ENCODE measurements at regions of chr21 and their contacts with region 1.

Region 1: DNA sequence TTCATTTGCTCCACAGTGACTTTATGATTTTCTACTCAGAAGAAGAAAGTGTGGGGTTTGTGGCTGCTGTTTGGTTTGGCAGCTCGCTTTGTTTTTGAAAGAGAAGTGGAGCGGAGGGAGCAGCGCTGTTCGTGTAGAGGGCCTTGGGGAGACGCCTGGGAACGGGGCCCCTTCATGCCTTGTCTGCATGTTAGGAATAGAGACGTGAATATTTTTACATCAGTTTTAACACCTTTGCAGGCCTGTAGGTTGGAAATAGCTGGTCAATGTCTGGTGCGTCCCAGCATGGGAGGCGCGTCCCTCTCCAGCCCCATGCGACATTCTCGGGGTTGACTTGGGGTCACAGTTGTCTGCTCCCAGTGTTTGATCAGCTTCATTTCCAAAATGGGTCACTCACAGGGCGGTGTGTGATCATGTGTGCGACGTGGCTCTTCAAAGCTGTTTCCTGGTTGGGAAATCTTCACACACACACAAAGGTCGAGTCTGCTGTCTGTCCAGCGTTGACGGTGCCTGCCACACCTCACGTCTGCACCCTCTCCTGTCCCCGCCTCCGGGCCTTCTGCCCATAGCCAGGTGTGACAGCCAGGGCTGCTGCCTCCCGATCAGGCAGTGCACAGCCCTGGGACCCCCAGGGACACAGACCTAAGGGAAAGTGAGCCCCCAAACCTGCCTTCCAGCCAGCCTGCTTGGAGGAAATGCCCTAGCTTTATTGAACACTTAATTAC is 149.2 kb downstream of the PSMG1 start:
- DNase-seq: peak; percentile 98
- ATAC-seq: peak; percentile 99
- H3K4me3 ChIP-seq: no peak overlapping the region; a peak in 1 of 6 replicates
- H3K27ac ChIP-seq: peak overlapping the region; percentile 72
- H3K4me1 ChIP-seq: peaks cover 88% of the 10 kb centered on the region
- H3K27me3 ChIP-seq: no peaks in the 10 kb centered on the region
- CTCF ChIP-seq: peak; percentile 71
- EP300 ChIP-seq: peak; percentile 67 to 98; a peak in 3 of 4 replicates
- POLR2A ChIP-seq: peak; percentile 34 to 47; a peak in 2 of 4 replicates
- RAD21 ChIP-seq: peak; percentile 33; the same call in 1 of the 2 replicates

Region 2: GRCh38 chr21:38588096-38588495 is 445.9 kb before region 1 on chr21:
- CTCF ChIA-PET with region 1: no interaction called
- POLR2A ChIA-PET with region 1: no interaction called
- in situ Hi-C with region 1: no loop called
- intact Hi-C with region 1: loop called (anchors 5 kb)
- DNase-seq: no peak
- ATAC-seq: no peak
- H3K4me3 ChIP-seq: no peak overlapping the region
- H3K27ac ChIP-seq: no peak overlapping the region
- H3K4me1 ChIP-seq: peaks cover 11% of the 10 kb centered on the region
- H3K27me3 ChIP-seq: peaks cover 2 to 3% of the 10 kb centered on the region in 2 experiments; a peak in 4 of 5 replicates
- CTCF ChIP-seq: no peak
- EP300 ChIP-seq: no peak
- POLR2A ChIP-seq: no peak
- RAD21 ChIP-seq: no peak

Region 3: GRCh38 chr21:38831526-38832467 is 202.2 kb before region 1 on chr21:
- CTCF ChIA-PET with region 1: no interaction called
- POLR2A ChIA-PET with region 1: interaction called, 3 read pairs
- in situ Hi-C with region 1: no loop called
- intact Hi-C with region 1: loop called (anchors 5 kb)
- DNase-seq: peak; percentile 91
- ATAC-seq: peak; percentile 86
- H3K4me3 ChIP-seq: no peak overlapping the region; a peak in 1 of 6 replicates
- H3K27ac ChIP-seq: peak overlapping the region; percentile 31
- H3K4me1 ChIP-seq: peaks cover 51% of the 10 kb centered on the region
- H3K27me3 ChIP-seq: no peaks in the 10 kb centered on the region
- CTCF ChIP-seq: no peak
- EP300 ChIP-seq: peak; percentile 49 to 69; a peak in 2 of 4 replicates
- POLR2A ChIP-seq: no peak
- RAD21 ChIP-seq: no peak

Region 4: GRCh38 chr21:38914283-38915012 is 119.6 kb before region 1 on chr21:
- CTCF ChIA-PET with region 1: no interaction called
- POLR2A ChIA-PET with region 1: no interaction called
- in situ Hi-C with region 1: no loop called
- intact Hi-C with region 1: loop called (anchors 5 kb)
- DNase-seq: no peak
- ATAC-seq: peak; percentile 8; the same call in 2 of the 3 replicates
- H3K4me3 ChIP-seq: peak overlapping the region in 1 of 3 experiments; percentile 11; a peak in 1 of 6 replicates
- H3K27ac ChIP-seq: peak overlapping the region; percentile 48
- H3K4me1 ChIP-seq: peaks cover 85% of the 10 kb centered on the region
- H3K27me3 ChIP-seq: no peaks in the 10 kb centered on the region; a peak in 1 of 5 replicates
- CTCF ChIP-seq: no peak
- EP300 ChIP-seq: peak in 1 of 2 experiments; percentile 34; a peak in 1 of 4 replicates
- POLR2A ChIP-seq: no peak
- RAD21 ChIP-seq: no peak

Region 5: GRCh38 chr21:39014747-39015146 is 19.3 kb before region 1 on chr21:
- CTCF ChIA-PET with region 1: no interaction called
- POLR2A ChIA-PET with region 1: no interaction called
- in situ Hi-C with region 1: no loop called
- intact Hi-C with region 1: no loop called
- DNase-seq: no peak
- ATAC-seq: no peak
- H3K4me3 ChIP-seq: no peak overlapping the region
- H3K27ac ChIP-seq: no peak overlapping the region
- H3K4me1 ChIP-seq: peaks cover 36% of the 10 kb centered on the region
- H3K27me3 ChIP-seq: no peaks in the 10 kb centered on the region
- CTCF ChIP-seq: no peak
- EP300 ChIP-seq: no peak
- POLR2A ChIP-seq: no peak
- RAD21 ChIP-seq: no peak

Region 6: DNA sequence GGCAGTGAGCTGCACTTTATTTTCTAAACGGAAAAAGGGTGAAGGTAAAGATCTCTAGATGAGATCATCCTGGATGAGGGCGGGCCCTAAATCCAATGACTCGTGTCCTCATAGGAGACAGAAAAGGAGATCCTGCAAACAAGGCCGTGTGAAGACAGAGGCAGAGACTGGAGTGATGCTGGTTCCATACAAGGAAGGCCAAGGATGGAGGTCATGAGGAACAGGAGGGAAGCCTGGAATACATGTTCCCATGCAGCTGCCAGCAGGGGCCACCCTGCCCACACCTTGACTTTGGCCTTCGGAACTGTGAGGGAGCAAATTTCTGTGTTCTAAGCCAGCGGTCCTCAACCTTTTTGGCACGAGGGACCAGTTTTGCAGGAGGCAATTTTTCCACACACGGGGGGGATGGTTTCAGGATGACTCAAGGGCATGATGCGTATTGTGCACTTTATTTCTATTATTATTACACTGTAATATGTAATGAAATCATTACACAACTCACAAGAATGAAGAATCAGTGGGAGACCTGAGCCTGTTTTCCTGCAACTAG is 54.9 kb after region 1 on chr21:
- CTCF ChIA-PET with region 1: no interaction called
- POLR2A ChIA-PET with region 1: no interaction called
- in situ Hi-C with region 1: no loop called
- intact Hi-C with region 1: loop called (anchors 10 kb)
- DNase-seq: peak; percentile 50
- ATAC-seq: peak; percentile 71
- H3K4me3 ChIP-seq: no peak overlapping the region
- H3K27ac ChIP-seq: no peak overlapping the region
- H3K4me1 ChIP-seq: peaks cover 73% of the 10 kb centered on the region
- H3K27me3 ChIP-seq: no peaks in the 10 kb centered on the region
- CTCF ChIP-seq: peak; percentile 80
- EP300 ChIP-seq: no peak
- POLR2A ChIP-seq: no peak
- RAD21 ChIP-seq: peak; percentile 55

Region 7: DNA sequence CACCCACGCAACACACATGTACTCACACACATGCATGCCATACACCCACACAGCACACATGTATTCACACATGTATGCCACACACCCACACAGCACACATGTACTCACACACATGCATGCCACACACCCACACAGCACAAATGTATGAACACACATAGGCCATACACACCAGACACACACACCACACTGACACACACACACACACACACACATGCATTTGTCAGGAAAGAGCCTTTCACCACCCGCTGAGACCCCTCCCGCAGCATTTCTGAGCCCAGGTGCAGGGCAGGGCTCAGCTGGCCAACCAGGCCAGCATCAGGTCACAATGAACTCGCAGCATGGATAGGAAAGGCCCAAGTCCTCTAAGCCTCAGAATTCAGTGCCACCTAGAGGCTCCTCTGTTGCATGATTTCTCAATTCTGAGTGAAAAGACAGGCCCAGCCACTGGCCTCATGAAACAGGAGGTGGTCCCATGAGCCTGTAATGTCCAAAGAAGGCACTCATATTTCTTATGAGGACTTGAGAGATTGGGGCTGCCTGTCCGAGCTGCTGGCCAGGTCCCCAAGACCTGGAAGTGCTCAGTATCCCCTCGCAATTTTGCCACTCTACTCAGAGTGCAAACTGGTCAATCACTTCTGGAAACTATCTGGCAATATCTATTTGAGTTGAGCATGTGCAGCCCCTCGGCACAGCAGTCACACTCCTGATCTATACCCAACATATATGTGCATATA is 91.9 kb after region 1 on chr21:
- CTCF ChIA-PET with region 1: no interaction called
- POLR2A ChIA-PET with region 1: no interaction called
- in situ Hi-C with region 1: no loop called
- intact Hi-C with region 1: loop called (anchors 5 kb)
- DNase-seq: peak; percentile 80
- ATAC-seq: peak; percentile 99
- H3K4me3 ChIP-seq: no peak overlapping the region
- H3K27ac ChIP-seq: no peak overlapping the region
- H3K4me1 ChIP-seq: peaks cover 33% of the 10 kb centered on the region
- H3K27me3 ChIP-seq: no peaks in the 10 kb centered on the region
- CTCF ChIP-seq: peak; percentile 92
- EP300 ChIP-seq: peak in 1 of 2 experiments; percentile 31; a peak in 1 of 4 replicates
- POLR2A ChIP-seq: no peak
- RAD21 ChIP-seq: peak; percentile 79

Measured in HepG2 (cell line).